Activated B cell treated with CpG ODN at 0.5 μM for 24 hours (primary cell): ENCODE measurements at regions of chr14 and their contacts with region 1.

Region 1: DNA sequence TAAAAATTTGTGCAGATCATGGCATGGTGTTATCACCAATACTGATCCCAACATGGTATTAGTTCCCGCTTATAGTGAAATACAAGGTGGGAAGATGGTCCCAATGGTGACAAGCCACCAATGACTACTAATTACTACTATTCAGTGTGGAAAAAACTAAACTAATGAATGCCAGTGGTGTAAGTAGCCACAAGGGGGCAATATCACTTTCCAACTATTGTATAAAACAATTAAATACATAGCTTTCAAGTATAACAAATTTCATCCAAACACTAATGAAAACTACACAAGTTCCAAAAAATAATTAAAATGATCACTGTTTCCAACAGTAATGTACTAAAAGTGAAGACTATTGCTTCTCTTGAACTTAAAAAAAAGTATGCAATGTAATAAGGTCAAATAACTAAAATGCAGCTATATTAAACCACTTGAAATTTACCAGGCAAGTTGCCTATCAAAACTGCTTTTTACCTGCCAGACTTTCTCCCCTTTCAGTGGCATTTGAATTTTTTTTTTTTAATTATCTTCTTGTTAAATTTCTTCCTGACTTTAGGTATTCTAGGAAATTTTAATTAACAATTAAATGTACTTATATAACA is 58.0 kb downstream of the PAPLN start:
- DNase-seq: no peak
- ATAC-seq: peak; percentile 60
- H3K4me3 Mint-ChIP-seq: no peak overlapping the region
- H3K27ac Mint-ChIP-seq: no peak overlapping the region
- H3K4me1 Mint-ChIP-seq: peaks cover 2% of the 10 kb centered on the region
- H3K27me3 Mint-ChIP-seq: no peaks in the 10 kb centered on the region
- CTCF ChIP-seq: peak; percentile 33

Region 2: DNA sequence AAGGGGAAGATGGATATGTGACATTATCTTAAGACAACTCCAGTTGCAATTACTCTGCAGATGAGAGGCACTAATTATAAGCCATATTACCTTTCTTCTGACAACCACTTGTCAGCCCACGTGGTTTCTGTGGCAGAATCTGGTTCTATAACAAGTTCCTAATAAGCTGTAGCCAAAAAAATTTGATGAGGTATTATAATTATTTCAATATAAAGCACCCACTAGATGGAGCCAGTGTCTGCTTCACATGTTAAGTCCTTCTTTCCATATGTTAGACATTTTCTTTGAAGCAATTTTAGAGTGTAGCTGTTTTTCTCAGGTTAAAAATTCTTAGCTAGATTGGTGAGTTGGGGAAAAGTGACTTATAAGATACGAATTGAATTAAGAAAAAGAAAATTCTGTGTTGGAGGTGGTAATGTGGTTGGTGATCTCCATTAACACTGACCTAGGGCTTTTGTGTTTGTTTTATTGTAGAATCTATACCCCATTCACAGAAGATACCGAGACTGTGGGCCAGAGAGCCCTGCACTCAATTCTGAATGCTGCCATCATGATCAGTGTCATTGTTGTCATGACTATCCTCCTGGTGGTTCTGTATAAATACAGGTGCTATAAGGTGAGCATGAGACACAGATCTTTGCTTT is 122.1 kb before region 1 on chr14:
- CTCF ChIA-PET with region 1: interaction called, 4 read pairs
- POLR2A ChIA-PET with region 1: no interaction called
- intact Hi-C with region 1: loop called (anchors 5 kb)
- DNase-seq: no peak
- ATAC-seq: no peak
- H3K4me3 Mint-ChIP-seq: no peak overlapping the region
- H3K27ac Mint-ChIP-seq: no peak overlapping the region
- H3K4me1 Mint-ChIP-seq: no peaks in the 10 kb centered on the region
- H3K27me3 Mint-ChIP-seq: no peaks in the 10 kb centered on the region
- CTCF ChIP-seq: no peak

Region 3: DNA sequence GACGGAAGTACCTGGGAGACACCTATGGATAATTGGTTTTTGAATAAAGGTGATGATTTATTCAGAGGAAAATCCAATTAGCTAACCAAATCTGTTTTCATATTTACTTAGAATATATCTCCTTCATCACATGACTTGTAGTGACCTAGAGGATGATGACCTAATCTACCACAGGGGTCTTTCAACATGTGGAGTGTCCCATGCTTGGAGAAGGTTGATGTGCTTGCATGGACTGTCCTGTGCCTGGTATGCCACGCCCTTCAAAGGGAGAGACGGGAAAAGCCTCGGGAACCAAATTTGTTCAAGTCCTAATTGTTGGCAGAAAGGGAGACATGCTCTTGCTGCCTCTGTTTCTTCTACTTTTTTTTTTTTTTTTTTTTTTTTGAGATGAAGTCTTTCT is 69.8 kb before region 1 on chr14:
- CTCF ChIA-PET with region 1: no interaction called
- POLR2A ChIA-PET with region 1: no interaction called
- intact Hi-C with region 1: no loop called
- DNase-seq: no peak
- ATAC-seq: no peak
- H3K4me3 Mint-ChIP-seq: no peak overlapping the region
- H3K27ac Mint-ChIP-seq: no peak overlapping the region
- H3K4me1 Mint-ChIP-seq: peaks cover 15% of the 10 kb centered on the region
- H3K27me3 Mint-ChIP-seq: no peaks in the 10 kb centered on the region
- CTCF ChIP-seq: no peak

Region 4: GRCh38 chr14:73403181-73403752 is 108.0 kb after region 1 on chr14:
- CTCF ChIA-PET with region 1: interaction called, 11 read pairs
- POLR2A ChIA-PET with region 1: no interaction called
- intact Hi-C with region 1: no loop called
- DNase-seq: no peak
- ATAC-seq: no peak
- H3K4me3 Mint-ChIP-seq: no peak overlapping the region
- H3K27ac Mint-ChIP-seq: peak overlapping the region; percentile 88
- H3K4me1 Mint-ChIP-seq: peaks cover 57% of the 10 kb centered on the region
- H3K27me3 Mint-ChIP-seq: no peaks in the 10 kb centered on the region
- CTCF ChIP-seq: no peak

Region 5: GRCh38 chr14:73458151-73458976 is 163.1 kb after region 1 on chr14 and contains the start of gene NUMB:
- CTCF ChIA-PET with region 1: interaction called, 14 read pairs
- POLR2A ChIA-PET with region 1: interaction called, 5 read pairs
- intact Hi-C with region 1: no loop called
- DNase-seq: peak; percentile 74
- ATAC-seq: peak; percentile 97
- H3K4me3 Mint-ChIP-seq: peak within 1 kb of the TSS; percentile 96
- H3K27ac Mint-ChIP-seq: peak within 1 kb of the TSS; percentile 92
- H3K4me1 Mint-ChIP-seq: peaks cover 52% of the 10 kb centered on the region
- H3K27me3 Mint-ChIP-seq: no peaks in the 10 kb centered on the region
- CTCF ChIP-seq: no peak
- total RNA-seq, gene NUMB: 69.5 and 71.4 TPM in 2 replicates

Region 6: DNA sequence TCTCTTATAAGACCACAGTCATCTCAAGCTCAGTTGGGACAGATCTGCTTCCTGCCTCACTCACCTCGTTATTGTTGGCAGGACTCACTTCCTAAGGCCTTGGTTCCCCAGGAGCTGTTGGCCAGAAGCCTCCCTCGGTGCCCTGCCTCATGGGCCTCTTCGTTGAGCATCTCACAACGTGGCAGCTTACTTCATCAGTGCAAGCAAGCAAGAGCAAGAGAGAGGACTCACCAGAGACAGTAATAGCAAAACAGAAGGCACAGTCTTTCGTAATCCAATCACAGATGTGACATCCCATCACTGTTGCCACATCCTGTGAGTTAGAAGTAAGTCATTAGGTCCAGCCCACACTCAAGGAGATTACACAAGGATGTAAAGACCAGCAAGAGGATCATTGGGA is 168.1 kb after region 1 on chr14:
- CTCF ChIA-PET with region 1: interaction called, 205 read pairs
- POLR2A ChIA-PET with region 1: no interaction called
- intact Hi-C with region 1: no loop called
- DNase-seq: no peak
- ATAC-seq: no peak
- H3K4me3 Mint-ChIP-seq: no peak overlapping the region
- H3K27ac Mint-ChIP-seq: peak overlapping the region; percentile 59
- H3K4me1 Mint-ChIP-seq: peaks cover 55% of the 10 kb centered on the region
- H3K27me3 Mint-ChIP-seq: no peaks in the 10 kb centered on the region
- CTCF ChIP-seq: no peak

Region 7: DNA sequence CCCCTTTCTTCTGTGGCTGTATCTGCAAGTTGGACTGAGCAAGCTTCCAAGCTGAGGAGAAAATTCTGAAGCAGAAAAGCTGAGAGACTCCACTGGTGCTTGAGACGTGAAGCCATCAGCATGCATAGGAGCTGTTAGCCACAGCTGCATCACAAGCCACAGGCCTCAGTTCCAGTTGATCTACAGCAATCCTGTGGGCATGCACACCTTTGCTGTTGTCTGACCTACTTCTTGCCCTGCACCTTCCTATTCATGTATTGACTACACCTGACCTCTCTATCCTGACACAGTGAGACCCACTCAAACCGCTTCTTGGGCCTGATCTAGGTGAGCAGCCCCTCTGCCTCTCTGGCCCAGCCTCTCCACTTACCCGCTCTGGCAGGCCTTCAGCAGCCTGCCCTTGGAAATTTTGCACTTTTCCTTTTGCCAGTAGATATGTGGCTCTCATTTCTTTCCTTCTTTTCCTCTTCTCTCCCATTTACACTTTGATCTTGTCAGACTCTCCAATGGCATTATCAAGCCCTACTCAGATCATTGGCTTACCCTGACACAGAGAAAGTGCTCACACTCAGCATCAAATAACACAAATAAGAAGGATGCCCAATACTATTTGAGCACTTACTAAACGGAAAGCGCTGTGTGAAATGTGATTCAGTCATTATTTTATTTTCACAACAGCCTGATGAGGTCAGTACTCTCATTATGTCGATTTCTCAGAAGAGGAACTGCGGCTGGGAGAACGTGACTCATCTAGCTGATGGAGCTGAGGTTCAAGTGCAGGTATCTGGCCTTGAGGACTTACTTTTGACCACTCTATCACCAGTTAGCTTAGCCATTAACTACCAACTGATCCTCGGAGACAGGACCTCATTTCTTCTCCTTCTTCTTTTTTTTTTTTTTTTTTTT is 534.5 kb after region 1 on chr14:
- CTCF ChIA-PET with region 1: no interaction called
- POLR2A ChIA-PET with region 1: no interaction called
- intact Hi-C with region 1: no loop called
- DNase-seq: no peak
- ATAC-seq: peak; percentile 63
- H3K4me3 Mint-ChIP-seq: no peak overlapping the region
- H3K27ac Mint-ChIP-seq: no peak overlapping the region
- H3K4me1 Mint-ChIP-seq: peaks cover 6% of the 10 kb centered on the region
- H3K27me3 Mint-ChIP-seq: no peaks in the 10 kb centered on the region
- CTCF ChIP-seq: no peak

Region 8: DNA sequence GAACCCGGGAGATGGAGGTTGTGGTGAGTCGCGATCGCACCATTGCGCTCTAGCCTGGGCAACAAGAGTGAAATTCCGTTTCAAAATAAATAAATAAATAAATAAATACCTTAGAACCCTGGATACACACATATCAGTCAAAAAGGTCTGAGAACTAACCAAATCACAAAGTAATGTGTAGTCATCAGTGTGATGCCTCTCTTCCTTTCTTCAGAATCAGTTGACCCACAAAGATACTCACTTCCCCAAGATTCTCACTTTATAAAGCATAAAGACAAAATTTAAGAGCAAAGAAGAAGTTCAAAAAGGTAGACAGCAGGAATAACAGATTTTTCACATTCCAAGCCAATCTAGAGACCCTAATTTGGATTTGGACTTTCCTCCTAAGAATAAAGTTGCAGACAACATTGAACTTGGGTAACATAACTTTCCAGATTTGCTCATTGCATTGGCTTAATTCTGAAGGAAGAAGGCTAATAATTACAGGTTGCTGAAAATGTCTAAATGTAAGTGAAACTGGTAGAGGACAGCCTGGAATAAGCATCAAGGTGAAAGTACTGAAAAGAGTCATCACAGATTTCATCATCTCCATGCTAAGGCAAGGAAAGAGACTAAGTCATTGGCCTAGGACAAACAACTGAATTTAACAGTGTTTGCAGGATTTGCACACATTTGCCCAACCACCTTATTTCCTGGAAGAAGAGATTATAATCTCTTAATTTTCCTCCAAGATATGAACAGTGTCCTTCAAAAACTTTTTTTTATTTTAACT is 1863.7 kb after region 1 on chr14:
- CTCF ChIA-PET with region 1: no interaction called
- POLR2A ChIA-PET with region 1: no interaction called
- intact Hi-C with region 1: no loop called
- DNase-seq: no peak
- ATAC-seq: no peak
- H3K4me3 Mint-ChIP-seq: no peak overlapping the region
- H3K27ac Mint-ChIP-seq: peak overlapping the region; percentile 51
- H3K4me1 Mint-ChIP-seq: peaks cover 21% of the 10 kb centered on the region
- H3K27me3 Mint-ChIP-seq: no peaks in the 10 kb centered on the region
- CTCF ChIP-seq: no peak